PC-9 (cell line): ENCODE measurements at regions of chr20 and their contacts with region 1.

Region 1: DNA sequence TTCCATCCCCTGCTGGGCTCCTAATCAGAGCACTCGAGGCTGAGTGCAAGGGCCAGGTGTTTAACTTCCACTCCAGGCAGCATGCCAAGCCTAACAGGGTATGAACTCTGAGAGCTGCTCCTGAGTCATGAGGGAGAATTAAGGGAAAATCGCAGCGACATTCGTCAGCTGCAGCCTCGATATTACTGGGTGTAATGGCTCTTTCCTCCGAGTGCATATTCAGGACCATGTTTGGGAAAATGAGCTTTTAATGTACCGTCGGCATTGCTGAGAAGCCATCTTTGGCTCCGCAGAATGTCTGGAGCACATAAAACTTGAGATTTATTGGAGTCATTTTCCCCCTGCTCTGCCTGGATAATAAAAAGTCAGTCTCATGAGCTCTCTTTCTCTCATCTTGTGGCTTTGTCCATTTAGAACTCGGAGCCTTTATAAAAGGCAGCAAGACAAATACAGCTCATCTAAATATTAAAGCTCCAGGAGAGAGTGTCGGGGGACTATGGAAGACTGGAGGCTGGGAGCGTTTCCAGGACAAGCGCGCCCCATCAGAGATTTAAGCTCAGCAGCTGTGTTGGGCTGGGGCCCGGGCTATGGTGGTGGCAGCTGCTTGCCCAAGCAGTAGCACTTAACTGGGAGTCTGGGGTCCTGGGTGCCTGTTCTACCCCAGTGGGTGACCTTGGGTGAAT is 103.7 kb downstream of the TOX2 start:
- DNase-seq: peak; percentile 77 to 94
- H3K4me3 ChIP-seq: peak overlapping the region; percentile 33; the same call in 1 of the 2 replicates
- H3K27ac ChIP-seq: peak overlapping the region; percentile 51
- H3K4me1 ChIP-seq: peaks cover 26% of the 10 kb centered on the region
- H3K27me3 ChIP-seq: no peaks in the 10 kb centered on the region
- CTCF ChIP-seq: no peak

Region 2: GRCh38 chr20:43781215-43781614 is 237.2 kb before region 1 on chr20:
- CTCF ChIA-PET with region 1: no interaction called
- POLR2A ChIA-PET with region 1: interaction called, 26 read pairs
- intact Hi-C with region 1: no loop called
- DNase-seq: no peak
- H3K4me3 ChIP-seq: no peak overlapping the region
- H3K27ac ChIP-seq: peak overlapping the region; percentile 39
- H3K4me1 ChIP-seq: peaks cover 20% of the 10 kb centered on the region
- H3K27me3 ChIP-seq: no peaks in the 10 kb centered on the region
- CTCF ChIP-seq: no peak

Region 3: GRCh38 chr20:43942661-43943290 is 75.6 kb before region 1 on chr20:
- CTCF ChIA-PET with region 1: no interaction called
- POLR2A ChIA-PET with region 1: no interaction called
- intact Hi-C with region 1: loop called (anchors 5 kb)
- DNase-seq: peak; percentile 70 to 85
- H3K4me3 ChIP-seq: peak overlapping the region; percentile 53
- H3K27ac ChIP-seq: peak overlapping the region; percentile 95
- H3K4me1 ChIP-seq: peaks cover 68% of the 10 kb centered on the region
- H3K27me3 ChIP-seq: no peaks in the 10 kb centered on the region
- CTCF ChIP-seq: no peak

Region 4: DNA sequence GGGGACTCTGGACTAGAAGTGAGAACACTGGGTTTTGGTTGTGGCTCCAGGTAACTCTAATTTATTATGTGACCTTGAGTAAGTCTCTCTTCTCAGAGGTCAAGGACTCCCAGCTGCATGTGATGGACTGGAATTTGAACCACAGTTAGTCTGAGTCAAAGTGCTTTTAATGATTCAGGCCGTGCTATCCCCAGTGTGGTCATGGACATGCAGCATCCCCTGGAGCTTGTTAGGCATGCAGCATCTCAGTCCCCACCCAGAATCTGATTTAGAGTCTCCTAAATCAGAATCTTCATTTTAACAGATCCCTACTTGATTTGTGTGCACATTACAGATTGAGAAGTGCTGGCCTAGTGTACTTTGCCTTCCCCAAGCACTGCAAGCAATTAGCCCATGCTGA is 29.5 kb before region 1 on chr20:
- CTCF ChIA-PET with region 1: no interaction called
- POLR2A ChIA-PET with region 1: no interaction called
- intact Hi-C with region 1: no loop called
- DNase-seq: no peak
- H3K4me3 ChIP-seq: no peak overlapping the region
- H3K27ac ChIP-seq: no peak overlapping the region
- H3K4me1 ChIP-seq: no peaks in the 10 kb centered on the region
- H3K27me3 ChIP-seq: no peaks in the 10 kb centered on the region
- CTCF ChIP-seq: no peak